CD8-positive, alpha-beta T cell (primary cell): ENCODE measurements at regions of chr12 and their contacts with region 1.

Region 1: DNA sequence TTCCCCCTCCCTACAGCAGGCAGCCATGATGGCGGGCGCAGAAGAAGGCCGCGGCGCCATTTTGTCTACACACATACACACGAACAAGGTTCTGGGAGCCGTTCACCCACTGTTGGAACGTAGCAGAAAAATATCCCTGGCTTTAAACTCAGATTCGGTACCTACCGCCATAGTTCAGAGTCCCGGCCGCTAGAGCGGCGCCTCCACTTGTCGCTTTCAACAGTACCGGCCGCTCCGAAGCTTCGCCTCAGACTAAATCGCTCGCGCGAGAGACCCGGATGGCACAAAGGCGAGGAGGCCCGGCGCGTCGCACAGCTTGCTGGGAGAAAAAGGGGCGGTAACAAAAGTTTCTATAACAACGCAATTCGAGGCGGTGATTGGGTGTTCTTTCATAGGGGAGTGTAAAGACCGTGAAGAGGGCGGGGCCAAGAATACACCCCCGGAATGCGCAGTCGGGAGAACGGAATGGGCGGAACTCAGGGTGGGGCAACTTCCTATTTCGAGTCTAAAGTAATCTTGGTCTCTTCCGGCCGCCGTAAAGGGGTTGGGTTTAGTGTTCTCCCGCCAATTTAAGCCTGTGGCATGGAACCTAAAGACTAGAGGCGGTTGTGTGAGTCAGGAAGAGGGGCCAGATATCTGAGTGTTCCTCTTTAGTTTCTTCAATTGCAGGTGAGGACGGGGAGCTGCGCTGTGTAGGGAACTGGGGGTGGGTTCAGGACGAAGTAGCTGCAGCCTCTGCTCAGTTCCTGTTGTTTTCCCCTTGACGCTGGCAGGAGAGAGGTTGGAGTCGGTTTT is at the starts of genes KNTC1 and RSRC2:
- DNase-seq: peak; percentile 94 to 100 (median 96)
- ATAC-seq: peak; percentile 94
- H3K4me3 ChIP-seq: peak within 1 kb of the TSS; percentile 70 to 72
- H3K4me3 Mint-ChIP-seq: no peak within 1 kb of the TSS
- H3K27ac ChIP-seq: peak within 1 kb of the TSS; percentile 96 to 99
- H3K27ac Mint-ChIP-seq: peak within 1 kb of the TSS; percentile 15
- H3K4me1 ChIP-seq: peaks cover 35% of the 10 kb centered on the region
- H3K4me1 Mint-ChIP-seq: peaks cover 34% of the 10 kb centered on the region
- H3K27me3 ChIP-seq: no peaks in the 10 kb centered on the region
- H3K27me3 Mint-ChIP-seq: no peaks in the 10 kb centered on the region
- CTCF ChIP-seq: no peak
- total RNA-seq, gene KNTC1: 14.1 to 15.1 TPM
- total RNA-seq, gene RSRC2: 325 to 333 TPM

Region 2: DNA sequence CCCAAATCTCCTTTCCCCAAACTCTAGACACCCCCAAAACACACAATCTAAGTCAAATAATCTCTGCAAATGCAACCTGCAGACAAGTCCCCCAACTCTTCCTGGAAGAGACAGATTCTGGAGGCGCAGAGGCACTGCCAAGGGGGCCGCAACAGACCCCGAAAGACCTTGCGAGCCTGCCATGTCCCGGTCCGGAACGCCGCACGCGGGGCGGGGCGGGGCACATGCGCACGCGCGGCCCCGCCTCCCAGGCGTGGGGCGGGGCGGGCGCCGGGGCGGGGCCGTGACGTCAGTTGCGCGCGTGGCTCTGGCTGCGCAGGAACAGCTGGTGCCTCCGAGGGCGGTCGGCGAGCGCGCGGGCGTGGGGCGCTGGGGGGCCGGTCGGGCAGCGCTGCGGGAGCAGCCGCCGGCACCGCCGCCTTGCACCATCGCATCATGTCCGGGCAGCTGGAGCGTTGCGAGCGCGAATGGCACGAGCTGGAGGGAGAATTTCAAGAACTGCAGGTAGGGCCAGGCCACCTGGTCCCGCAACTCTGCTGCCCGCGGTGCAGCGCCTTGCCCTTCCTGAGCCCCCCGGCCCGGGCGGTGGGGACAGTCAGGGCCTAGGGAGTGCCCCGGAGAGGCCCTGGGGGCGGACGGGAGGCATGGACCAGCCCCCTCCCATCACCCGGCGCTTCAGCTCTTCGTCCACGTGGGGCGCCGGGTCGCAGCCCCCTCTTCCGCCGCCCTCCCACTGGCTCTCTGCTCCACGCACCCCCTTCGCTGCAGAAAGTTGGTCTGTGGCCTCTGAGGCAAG is 814.2 kb before region 1 on chr12 and contains the start of gene TMEM120B:
- CTCF ChIA-PET with region 1: no interaction called
- POLR2A ChIA-PET with region 1: no interaction called
- intact Hi-C with region 1: loop called in 1 of 2 experiments (anchors 5 kb)
- DNase-seq: peak; percentile 70 to 92 (median 85)
- ATAC-seq: peak; percentile 92
- H3K4me3 ChIP-seq: peak within 1 kb of the TSS; percentile 96 to 100
- H3K4me3 Mint-ChIP-seq: peak within 1 kb of the TSS; percentile 92
- H3K27ac ChIP-seq: peak within 1 kb of the TSS; percentile 73 to 89
- H3K27ac Mint-ChIP-seq: peak within 1 kb of the TSS; percentile 91
- H3K4me1 ChIP-seq: peaks cover 17% of the 10 kb centered on the region
- H3K4me1 Mint-ChIP-seq: peaks cover 31% of the 10 kb centered on the region
- H3K27me3 ChIP-seq: no peaks in the 10 kb centered on the region
- H3K27me3 Mint-ChIP-seq: no peaks in the 10 kb centered on the region
- CTCF ChIP-seq: no peak
- total RNA-seq, gene TMEM120B: 6.4 to 7.3 TPM

Region 3: GRCh38 chr12:122452701-122453285 is 74.1 kb before region 1 on chr12:
- CTCF ChIA-PET with region 1: no interaction called
- POLR2A ChIA-PET with region 1: interaction called, 4 read pairs
- intact Hi-C with region 1: loop called in 1 of 2 experiments (anchors 1 kb)
- DNase-seq: peak in 2 of 9 experiments; percentile 35 to 56
- ATAC-seq: peak; percentile 18
- H3K4me3 ChIP-seq: peak overlapping the region in 1 of 2 experiments; percentile 1
- H3K4me3 Mint-ChIP-seq: peak overlapping the region; percentile 74
- H3K27ac ChIP-seq: peak overlapping the region; percentile 33 to 74
- H3K27ac Mint-ChIP-seq: peak overlapping the region; percentile 97
- H3K4me1 ChIP-seq: peaks cover 29% of the 10 kb centered on the region
- H3K4me1 Mint-ChIP-seq: peaks cover 27% of the 10 kb centered on the region
- H3K27me3 ChIP-seq: no peaks in the 10 kb centered on the region
- H3K27me3 Mint-ChIP-seq: no peaks in the 10 kb centered on the region
- CTCF ChIP-seq: no peak

Region 4: GRCh38 chr12:122895705-122896636 is 369.1 kb after region 1 on chr12 and contains the start of gene VPS37B:
- CTCF ChIA-PET with region 1: no interaction called
- POLR2A ChIA-PET with region 1: no interaction called
- intact Hi-C with region 1: loop called in 1 of 2 experiments (anchors 10 kb)
- DNase-seq: peak; percentile 79 to 96 (median 91)
- ATAC-seq: peak; percentile 63
- H3K4me3 ChIP-seq: peak within 1 kb of the TSS; percentile 80 to 93
- H3K4me3 Mint-ChIP-seq: peak within 1 kb of the TSS; percentile 91
- H3K27ac ChIP-seq: peak within 1 kb of the TSS; percentile 92 to 96
- H3K27ac Mint-ChIP-seq: peak within 1 kb of the TSS; percentile 99
- H3K4me1 ChIP-seq: peaks cover 82% of the 10 kb centered on the region
- H3K4me1 Mint-ChIP-seq: peaks cover 89% of the 10 kb centered on the region
- H3K27me3 ChIP-seq: no peaks in the 10 kb centered on the region
- H3K27me3 Mint-ChIP-seq: no peaks in the 10 kb centered on the region
- CTCF ChIP-seq: no peak
- total RNA-seq, gene VPS37B: 145 to 148 TPM

Region 5: DNA sequence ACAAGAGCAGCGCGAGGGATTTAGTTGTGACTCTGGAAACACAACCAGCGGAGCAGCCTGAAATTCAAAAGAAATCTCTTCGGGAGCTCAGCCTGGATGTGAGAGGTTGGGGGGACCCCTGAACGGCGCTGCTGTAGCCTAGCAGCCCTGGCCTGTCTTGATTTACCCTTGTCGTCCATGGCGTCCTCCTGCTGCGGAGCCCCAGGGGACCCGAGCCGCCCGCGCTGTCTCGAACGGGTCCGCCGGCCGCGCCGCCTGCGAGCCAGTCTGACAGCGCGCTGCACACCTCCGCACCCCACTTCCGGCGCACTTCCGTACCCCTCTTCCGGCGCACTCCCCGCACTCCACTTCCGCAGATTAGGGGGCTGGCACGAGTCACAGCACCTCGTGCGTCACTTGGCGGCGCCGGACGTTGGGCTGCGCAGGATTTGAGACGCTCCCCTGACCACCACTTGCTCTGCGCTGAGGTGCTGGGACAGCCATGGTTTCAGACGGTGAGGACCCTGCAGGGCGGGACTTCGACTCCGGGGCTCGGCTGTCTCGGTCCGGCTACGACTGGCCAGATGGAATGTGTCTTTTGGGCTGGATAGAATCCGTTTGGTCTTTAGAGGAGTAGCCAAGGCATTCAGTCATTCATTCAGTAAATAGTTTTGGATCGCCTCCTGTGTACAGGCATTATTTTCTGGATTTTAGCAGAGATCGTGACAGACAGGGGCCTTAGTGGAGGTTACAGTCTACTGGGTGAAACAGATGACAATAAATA is 1106.7 kb after region 1 on chr12 and contains the starts of genes EIF2B1 and GTF2H3:
- CTCF ChIA-PET with region 1: no interaction called
- POLR2A ChIA-PET with region 1: no interaction called
- intact Hi-C with region 1: loop called in 1 of 2 experiments (anchors 2 kb)
- DNase-seq: peak; percentile 88 to 99 (median 97)
- ATAC-seq: peak; percentile 94
- H3K4me3 ChIP-seq: peak within 1 kb of the TSS; percentile 77 to 79
- H3K4me3 Mint-ChIP-seq: peak within 1 kb of the TSS; percentile 92
- H3K27ac ChIP-seq: peak within 1 kb of the TSS; percentile 90 to 93
- H3K27ac Mint-ChIP-seq: peak within 1 kb of the TSS; percentile 98
- H3K4me1 ChIP-seq: peaks cover 21% of the 10 kb centered on the region
- H3K4me1 Mint-ChIP-seq: peaks cover 42% of the 10 kb centered on the region
- H3K27me3 ChIP-seq: no peaks in the 10 kb centered on the region
- H3K27me3 Mint-ChIP-seq: no peaks in the 10 kb centered on the region
- CTCF ChIP-seq: no peak
- total RNA-seq, gene EIF2B1: 35.9 to 40.0 TPM
- total RNA-seq, gene GTF2H3: 11.8 to 15.2 TPM